ENCODE measurements at regions of chr22 and their contacts with region 1.

Region 1: GRCh38 chr22:36220437-36220921 is 18.8 kb downstream of the APOL2 start:
- DNase-seq: no peak
- ATAC-seq: peak; percentile 69
- H3K4me3 ChIP-seq: no peak overlapping the region
- H3K27ac ChIP-seq: no peak overlapping the region
- H3K4me1 ChIP-seq: no peaks in the 10 kb centered on the region
- H3K27me3 ChIP-seq: peaks cover 3% of the 10 kb centered on the region
- CTCF ChIP-seq: no peak

Region 2: GRCh38 chr22:36239401-36240171 is 19.1 kb after region 1 on chr22 and contains the start of gene APOL2:
- CTCF ChIA-PET with region 1: interaction called, 3 read pairs
- POLR2A ChIA-PET with region 1: interaction called, 17 read pairs
- in situ Hi-C with region 1: no loop called
- intact Hi-C with region 1: no loop called
- DNase-seq: peak; percentile 75
- ATAC-seq: peak; percentile 99
- H3K4me3 ChIP-seq: peak within 1 kb of the TSS; percentile 71 to 95
- H3K27ac ChIP-seq: peak within 1 kb of the TSS; percentile 91
- H3K4me1 ChIP-seq: peaks cover 10% of the 10 kb centered on the region; the same call in 1 of the 2 replicates
- H3K27me3 ChIP-seq: no peaks in the 10 kb centered on the region
- CTCF ChIP-seq: peak; percentile 74
- total RNA-seq, gene APOL2: 34.4 TPM